Activated CD4-positive, alpha-beta memory T cell treated with anti-CD3 and anti-CD28 coated beads, Interleukin-2, amount 10 ng/mL, durations not matched to agents 7 days and 5 days (primary cell): ENCODE measurements at regions of chr12 and their contacts with region 1.

Region 1: GRCh38 chr12:8088574-8088973 is 6.5 kb downstream of the NECAP1 start:
- DNase-seq: peak; percentile 55
- H3K4me3 Mint-ChIP-seq: peak overlapping the region; percentile 70
- H3K27ac Mint-ChIP-seq: peak overlapping the region; percentile 87
- H3K4me1 Mint-ChIP-seq: peaks cover 50% of the 10 kb centered on the region
- H3K27me3 Mint-ChIP-seq: no peaks in the 10 kb centered on the region

Region 2: GRCh38 chr12:7609495-7609894 is 479.1 kb before region 1 on chr12:
- CTCF ChIA-PET with region 1: no interaction called
- POLR2A ChIA-PET with region 1: no interaction called
- DNase-seq: no peak
- H3K4me3 Mint-ChIP-seq: peak overlapping the region; percentile 62
- H3K27ac Mint-ChIP-seq: peak overlapping the region; percentile 45
- H3K4me1 Mint-ChIP-seq: peaks cover 15% of the 10 kb centered on the region
- H3K27me3 Mint-ChIP-seq: peaks cover 22% of the 10 kb centered on the region

Region 3: GRCh38 chr12:7923241-7924236 is 165.0 kb before region 1 on chr12:
- CTCF ChIA-PET with region 1: no interaction called
- POLR2A ChIA-PET with region 1: no interaction called
- DNase-seq: no peak
- H3K4me3 Mint-ChIP-seq: no peak overlapping the region
- H3K27ac Mint-ChIP-seq: no peak overlapping the region
- H3K4me1 Mint-ChIP-seq: peaks cover 61% of the 10 kb centered on the region
- H3K27me3 Mint-ChIP-seq: no peaks in the 10 kb centered on the region

Region 4: GRCh38 chr12:8026291-8026900 is 62.2 kb before region 1 on chr12:
- CTCF ChIA-PET with region 1: no interaction called
- POLR2A ChIA-PET with region 1: interaction called, 12 read pairs
- DNase-seq: peak; percentile 98
- H3K4me3 Mint-ChIP-seq: peak overlapping the region; percentile 88
- H3K27ac Mint-ChIP-seq: peak overlapping the region; percentile 99
- H3K4me1 Mint-ChIP-seq: peaks cover 17% of the 10 kb centered on the region
- H3K27me3 Mint-ChIP-seq: no peaks in the 10 kb centered on the region

Region 5: DNA sequence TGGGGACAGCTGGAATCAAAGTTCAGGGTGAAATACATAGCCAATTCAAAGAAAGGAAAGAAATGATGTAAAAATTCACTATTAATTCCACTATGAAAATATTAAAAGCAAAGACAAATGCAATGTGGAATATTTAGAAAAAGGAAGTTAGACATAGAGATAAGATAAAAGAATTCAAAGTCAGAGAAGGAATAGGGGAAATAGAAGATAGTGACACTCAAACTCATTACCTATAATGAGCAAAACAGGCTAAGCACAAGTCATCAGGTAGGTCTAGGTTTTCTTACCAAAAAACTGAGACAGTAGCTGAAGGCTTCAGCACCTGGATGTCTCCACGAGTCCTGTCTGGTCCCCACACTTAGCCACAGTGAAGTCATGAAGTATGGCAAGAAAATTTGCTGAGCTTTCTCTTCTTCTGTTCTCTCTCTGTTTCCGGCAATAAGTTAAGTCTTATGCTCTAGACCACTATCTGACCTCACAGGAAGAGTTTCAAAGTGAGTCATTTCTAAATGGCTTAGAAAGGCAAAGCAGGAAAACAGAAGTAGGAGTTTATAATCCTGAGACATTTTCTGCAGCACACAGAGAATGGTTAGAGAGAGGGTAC is 22.5 kb before region 1 on chr12 and contains the start of gene C3AR1:
- CTCF ChIA-PET with region 1: no interaction called
- POLR2A ChIA-PET with region 1: interaction called, 10 read pairs
- DNase-seq: peak; percentile 60
- H3K4me3 Mint-ChIP-seq: peak within 1 kb of the TSS; percentile 60
- H3K27ac Mint-ChIP-seq: peak within 1 kb of the TSS; percentile 88
- H3K4me1 Mint-ChIP-seq: peaks cover 52% of the 10 kb centered on the region
- H3K27me3 Mint-ChIP-seq: no peaks in the 10 kb centered on the region
- total RNA-seq, gene C3AR1: 11.4 to 12.2 TPM

Region 6: GRCh38 chr12:8127138-8127537 is 38.6 kb after region 1 on chr12:
- CTCF ChIA-PET with region 1: no interaction called
- POLR2A ChIA-PET with region 1: no interaction called
- DNase-seq: no peak
- H3K4me3 Mint-ChIP-seq: no peak overlapping the region
- H3K27ac Mint-ChIP-seq: no peak overlapping the region
- H3K4me1 Mint-ChIP-seq: peaks cover 10% of the 10 kb centered on the region
- H3K27me3 Mint-ChIP-seq: no peaks in the 10 kb centered on the region